Naive thymus-derived CD4-positive, alpha-beta T cell (primary cell): ENCODE measurements at regions of chr7 and their contacts with region 1.

Region 1: GRCh38 chr7:1193593-1194424 is 33.8 kb upstream of the ZFAND2A start:
- DNase-seq: peak in 3 of 9 donors; percentile 10 to 37 (median 19)
- ATAC-seq: peak; percentile 68
- H3K4me3 ChIP-seq: no peak overlapping the region
- H3K4me3 Mint-ChIP-seq: no peak overlapping the region
- H3K27ac ChIP-seq: no peak overlapping the region
- H3K27ac Mint-ChIP-seq: peak overlapping the region in 1 of 9 donors; percentile 13
- H3K4me1 ChIP-seq: peaks cover 0 to 5% of the 10 kb centered on the region in 2 donors
- H3K4me1 Mint-ChIP-seq: peaks cover 5 to 26% (median 10%) of the 10 kb centered on the region in 7 donors
- H3K27me3 ChIP-seq: no peaks in the 10 kb centered on the region
- H3K27me3 Mint-ChIP-seq: peaks cover 0 to 32% (median 13%) of the 10 kb centered on the region in 5 donors

Region 2: GRCh38 chr7:1473864-1474512 is 280.2 kb after region 1 on chr7:
- CTCF ChIA-PET with region 1: interaction called, 8 read pairs
- POLR2A ChIA-PET with region 1: no interaction called
- intact Hi-C with region 1: loop called in 1 of 2 experiments (anchors 1 kb)
- DNase-seq: peak; percentile 77 to 89 (median 87)
- ATAC-seq: peak; percentile 90
- H3K4me3 ChIP-seq: no peak overlapping the region
- H3K4me3 Mint-ChIP-seq: peak overlapping the region in 1 of 10 donors; percentile 49
- H3K27ac ChIP-seq: peak overlapping the region; percentile 45
- H3K27ac Mint-ChIP-seq: no peak overlapping the region
- H3K4me1 ChIP-seq: peaks cover 3 to 14% of the 10 kb centered on the region in 2 donors
- H3K4me1 Mint-ChIP-seq: peaks cover 3 to 12% (median 9%) of the 10 kb centered on the region in 7 donors
- H3K27me3 ChIP-seq: no peaks in the 10 kb centered on the region
- H3K27me3 Mint-ChIP-seq: no peaks in the 10 kb centered on the region

Region 3: DNA sequence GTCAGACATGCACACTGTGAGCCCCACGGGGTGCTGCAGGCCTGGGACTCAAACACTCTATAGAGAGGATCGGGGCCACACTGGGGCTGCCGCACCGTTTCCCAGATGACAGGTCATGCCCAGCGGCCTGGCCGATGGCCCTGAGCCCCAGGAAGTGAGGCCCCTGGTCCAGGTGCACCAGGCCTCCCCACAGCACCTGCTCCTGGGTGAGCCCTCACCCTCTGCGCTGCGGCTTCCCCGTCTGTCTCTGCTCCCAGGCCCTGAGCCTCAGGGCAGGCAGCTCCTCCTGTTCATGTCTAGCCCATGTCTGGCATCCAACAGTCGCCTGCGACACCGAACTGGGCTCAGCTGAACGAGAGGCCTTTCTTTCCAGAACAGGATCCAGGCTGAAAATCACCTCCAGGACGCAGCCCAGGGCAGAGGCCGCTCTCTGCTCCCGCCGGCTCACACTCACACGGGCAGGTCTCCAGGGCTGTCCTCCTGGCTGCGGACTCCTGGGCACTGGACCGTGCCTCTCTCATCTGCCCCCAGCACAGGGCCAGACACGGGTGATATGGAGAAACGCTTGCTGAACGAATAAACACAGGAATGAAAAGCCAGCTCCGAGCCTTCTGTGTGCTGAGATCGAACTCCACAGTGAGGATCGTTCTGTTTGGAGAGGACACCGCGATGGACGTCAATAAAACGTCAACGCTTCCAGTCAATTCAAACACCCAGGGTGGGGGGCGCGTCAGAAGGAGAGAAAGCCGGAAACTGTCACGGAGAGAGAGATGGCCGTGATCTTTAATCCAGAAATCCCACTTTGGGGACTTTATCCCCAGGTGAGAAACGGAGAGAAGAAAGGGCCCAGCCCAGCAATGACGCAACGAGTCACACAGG is 678.6 kb after region 1 on chr7:
- CTCF ChIA-PET with region 1: no interaction called
- POLR2A ChIA-PET with region 1: no interaction called
- intact Hi-C with region 1: no loop called
- DNase-seq: no peak
- ATAC-seq: no peak
- H3K4me3 ChIP-seq: no peak overlapping the region
- H3K4me3 Mint-ChIP-seq: no peak overlapping the region
- H3K27ac ChIP-seq: no peak overlapping the region
- H3K27ac Mint-ChIP-seq: peak overlapping the region in 1 of 9 donors; percentile 15
- H3K4me1 ChIP-seq: peaks cover 0 to 7% of the 10 kb centered on the region in 2 donors
- H3K4me1 Mint-ChIP-seq: peaks cover under 1 to 32% (median 14%) of the 10 kb centered on the region in 7 donors
- H3K27me3 ChIP-seq: no peaks in the 10 kb centered on the region
- H3K27me3 Mint-ChIP-seq: no peaks in the 10 kb centered on the region